Ovary (tissue), 10 donors: ENCODE measurements at regions of chr16 and their contacts with region 1.

Region 1: DNA sequence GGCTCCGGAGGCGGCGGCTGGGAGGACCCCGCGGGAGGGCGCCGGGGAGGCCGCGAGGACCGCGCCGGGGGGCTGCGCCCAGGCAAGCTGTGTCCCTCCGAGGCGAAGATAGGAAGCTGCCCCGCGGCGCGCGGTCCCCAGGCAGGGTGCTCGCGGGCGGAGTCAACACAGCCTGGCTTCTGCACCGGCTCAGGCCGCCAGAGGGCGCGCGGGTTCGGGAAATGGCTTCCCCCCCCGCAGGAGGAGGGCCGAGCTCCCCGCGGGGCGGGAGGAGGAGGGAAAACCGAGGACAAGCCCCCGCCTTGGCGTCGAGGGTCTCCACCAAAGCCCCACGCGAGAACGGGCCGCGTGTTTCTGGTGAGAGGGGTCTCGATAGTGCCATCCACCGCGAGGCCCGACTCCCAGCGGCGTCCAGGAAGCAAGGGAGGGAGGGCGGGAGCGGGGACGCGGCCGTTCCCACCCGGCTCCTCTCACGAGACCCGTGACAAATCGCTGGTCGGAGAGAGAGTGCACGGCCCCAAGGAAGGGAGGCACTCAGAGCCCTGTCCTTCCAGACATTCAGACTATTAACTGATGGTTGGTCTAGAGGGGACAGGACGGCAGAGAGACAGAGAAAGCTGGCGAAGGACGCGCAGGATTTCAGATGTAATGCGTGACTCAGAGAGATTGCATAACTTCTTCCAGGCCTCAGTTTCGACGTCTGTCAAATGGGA is 64.4 kb upstream of the DNAJA2 start:
- DNase-seq: peak; percentile 88 to 94 (median 93)
- H3K4me3 ChIP-seq: peak overlapping the region; percentile 70
- H3K27ac ChIP-seq: peak overlapping the region; percentile 59 to 77
- H3K4me1 ChIP-seq: peaks cover 7% of the 10 kb centered on the region
- H3K27me3 ChIP-seq: no peaks in the 10 kb centered on the region
- CTCF ChIP-seq: peak; percentile 91 to 95 (median 92)
- EP300 ChIP-seq: no peak
- POLR2A ChIP-seq: no peak

Region 2: DNA sequence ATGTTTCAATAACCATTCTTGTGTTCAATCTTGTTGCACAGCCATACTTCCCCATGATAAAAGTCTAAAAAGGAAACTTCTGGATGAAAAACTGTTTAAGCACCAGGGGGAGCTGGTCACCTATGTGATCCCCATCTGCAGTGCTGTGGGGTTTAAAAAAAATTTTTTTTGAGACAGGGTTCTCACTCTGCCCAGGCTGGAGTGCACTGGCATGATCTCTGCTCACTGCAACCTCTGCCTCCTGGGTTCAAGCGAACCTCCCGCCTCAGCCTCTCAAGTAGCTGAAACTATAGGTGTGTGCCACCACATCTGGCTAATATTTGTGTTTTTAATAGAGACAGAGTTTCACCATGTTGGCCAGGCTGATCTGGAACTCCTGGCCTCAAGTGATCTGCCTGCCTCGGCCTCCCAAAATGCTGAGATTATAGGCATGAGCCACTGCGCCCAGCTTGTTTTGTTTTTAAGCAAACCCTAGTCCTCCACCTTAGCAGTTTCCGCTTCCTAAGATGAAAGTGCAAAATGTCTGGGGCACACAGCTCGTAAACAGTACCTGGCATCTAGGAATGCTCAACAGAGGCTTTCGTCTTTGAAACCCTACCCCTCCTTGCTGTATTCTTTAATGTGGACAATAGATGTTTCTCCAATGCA is 89.9 kb before region 1 on chr16:
- intact Hi-C with region 1: no loop called
- DNase-seq: no peak
- H3K4me3 ChIP-seq: no peak overlapping the region
- H3K27ac ChIP-seq: no peak overlapping the region
- H3K4me1 ChIP-seq: no peaks in the 10 kb centered on the region
- H3K27me3 ChIP-seq: no peaks in the 10 kb centered on the region
- CTCF ChIP-seq: peak in 1 of 3 donors; percentile 12
- EP300 ChIP-seq: no peak
- POLR2A ChIP-seq: no peak

Region 3: GRCh38 chr16:46973207-46973995 is 64.5 kb before region 1 on chr16 and contains the start of gene DNAJA2:
- intact Hi-C with region 1: loop called in 1 of 4 experiments (anchors 10 kb)
- DNase-seq: peak; percentile 92 to 97 (median 95)
- H3K4me3 ChIP-seq: peak within 1 kb of the TSS; percentile 76
- H3K27ac ChIP-seq: peak within 1 kb of the TSS; percentile 88 to 94
- H3K4me1 ChIP-seq: peaks cover 5% of the 10 kb centered on the region
- H3K27me3 ChIP-seq: no peaks in the 10 kb centered on the region
- CTCF ChIP-seq: peak in 1 of 3 donors; percentile 11
- EP300 ChIP-seq: no peak
- POLR2A ChIP-seq: peak; percentile 94
- total RNA-seq, gene DNAJA2: 33.4 to 59.6 (median 58.4) TPM